ENCODE measurements at regions of chr12 and their contacts with region 1.

Region 1: DNA sequence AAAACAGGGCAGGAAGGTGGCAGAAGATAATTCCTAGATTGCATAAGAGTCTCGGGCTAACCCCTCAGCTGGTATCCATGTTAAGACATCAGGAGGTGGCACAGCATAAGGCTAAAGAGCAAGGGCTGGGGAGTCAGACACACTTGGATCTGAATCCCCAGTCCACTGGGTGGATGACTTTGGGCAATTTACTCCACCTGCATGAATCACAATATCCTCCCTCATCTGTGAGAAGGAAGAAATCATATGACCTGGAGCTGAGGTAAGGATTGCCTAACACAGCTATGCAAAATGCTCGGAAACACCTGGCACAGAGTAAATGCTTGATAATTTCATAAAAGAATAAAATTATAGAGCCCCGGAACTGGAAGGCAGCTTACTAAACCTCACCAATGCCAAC is 217.9 kb downstream of the PIK3C2G start:
- DNase-seq: peak; percentile 84
- H3K4me3 Mint-ChIP-seq: peak overlapping the region; percentile 46
- H3K27ac Mint-ChIP-seq: peak overlapping the region; percentile 83
- H3K4me1 Mint-ChIP-seq: peaks cover 14% of the 10 kb centered on the region
- H3K27me3 Mint-ChIP-seq: no peaks in the 10 kb centered on the region
- CTCF ChIP-seq: no peak

Region 2: GRCh38 chr12:18492372-18493025 is 13.2 kb after region 1 on chr12:
- CTCF ChIA-PET with region 1: interaction called, 3 read pairs
- POLR2A ChIA-PET with region 1: interaction called, 12 read pairs
- intact Hi-C with region 1: no loop called
- DNase-seq: peak; percentile 27
- H3K4me3 Mint-ChIP-seq: no peak overlapping the region
- H3K27ac Mint-ChIP-seq: peak overlapping the region; percentile 64
- H3K4me1 Mint-ChIP-seq: peaks cover 11% of the 10 kb centered on the region
- H3K27me3 Mint-ChIP-seq: no peaks in the 10 kb centered on the region
- CTCF ChIP-seq: no peak